ENCODE measurements at regions of chr12 and their contacts with region 1.

Region 1: GRCh38 chr12:109679501-109680263 is 33.9 kb upstream of the FAM222A start:
- DNase-seq: no peak
- H3K4me3 ChIP-seq: no peak overlapping the region
- H3K4me3 Mint-ChIP-seq: no peak overlapping the region
- H3K27ac Mint-ChIP-seq: no peak overlapping the region
- H3K4me1 ChIP-seq: 0 out of 2 replicates have a peak, but pooled peaks cover 9% of the 10 kb centered on the region
- H3K4me1 Mint-ChIP-seq: no peaks in the 10 kb centered on the region
- H3K27me3 ChIP-seq: no peaks in the 10 kb centered on the region
- H3K27me3 Mint-ChIP-seq: no peaks in the 10 kb centered on the region
- CTCF ChIP-seq: no peak

Region 2: DNA sequence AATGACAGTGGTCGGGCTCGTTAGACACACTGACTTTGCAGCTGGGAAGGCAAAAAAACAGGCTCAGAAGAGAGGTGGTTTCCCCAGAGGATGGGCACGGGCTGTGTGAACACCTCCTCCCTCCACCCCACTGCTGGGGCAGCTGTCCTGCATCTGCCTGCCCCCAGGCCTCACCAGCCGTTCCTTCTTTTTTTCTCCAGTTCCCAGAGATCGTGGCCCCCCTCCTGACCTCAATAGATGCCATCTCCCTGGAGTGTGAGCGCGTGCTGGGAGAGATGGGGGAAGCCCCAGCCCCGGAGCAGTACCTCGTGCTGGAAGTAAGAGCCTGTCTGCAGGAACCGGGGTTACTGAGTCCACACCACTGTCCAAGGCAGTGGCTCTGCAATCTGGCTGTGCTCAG is 88.6 kb before region 1 on chr12:
- CTCF ChIA-PET with region 1: no interaction called
- POLR2A ChIA-PET with region 1: interaction called, 14 read pairs
- intact Hi-C with region 1: no loop called
- DNase-seq: no peak
- H3K4me3 ChIP-seq: no peak overlapping the region
- H3K4me3 Mint-ChIP-seq: no peak overlapping the region
- H3K27ac Mint-ChIP-seq: no peak overlapping the region
- H3K4me1 ChIP-seq: no peaks in the 10 kb centered on the region
- H3K4me1 Mint-ChIP-seq: peaks cover 7% of the 10 kb centered on the region
- H3K27me3 ChIP-seq: no peaks in the 10 kb centered on the region
- H3K27me3 Mint-ChIP-seq: no peaks in the 10 kb centered on the region
- CTCF ChIP-seq: no peak

Measured in Caco-2 (cell line).